ENCODE measurements at regions of chr3 and their contacts with region 1.

Region 1: GRCh38 chr3:142828703-142829305 is 60.1 kb downstream of the PCOLCE2 start:
- DNase-seq: peak; percentile 86
- ATAC-seq: peak; percentile 99
- H3K4me3 ChIP-seq: no peak overlapping the region
- H3K27ac ChIP-seq: no peak overlapping the region
- H3K4me1 ChIP-seq: no peaks in the 10 kb centered on the region
- H3K27me3 ChIP-seq: no peaks in the 10 kb centered on the region
- CTCF ChIP-seq: peak; percentile 83

Region 2: DNA sequence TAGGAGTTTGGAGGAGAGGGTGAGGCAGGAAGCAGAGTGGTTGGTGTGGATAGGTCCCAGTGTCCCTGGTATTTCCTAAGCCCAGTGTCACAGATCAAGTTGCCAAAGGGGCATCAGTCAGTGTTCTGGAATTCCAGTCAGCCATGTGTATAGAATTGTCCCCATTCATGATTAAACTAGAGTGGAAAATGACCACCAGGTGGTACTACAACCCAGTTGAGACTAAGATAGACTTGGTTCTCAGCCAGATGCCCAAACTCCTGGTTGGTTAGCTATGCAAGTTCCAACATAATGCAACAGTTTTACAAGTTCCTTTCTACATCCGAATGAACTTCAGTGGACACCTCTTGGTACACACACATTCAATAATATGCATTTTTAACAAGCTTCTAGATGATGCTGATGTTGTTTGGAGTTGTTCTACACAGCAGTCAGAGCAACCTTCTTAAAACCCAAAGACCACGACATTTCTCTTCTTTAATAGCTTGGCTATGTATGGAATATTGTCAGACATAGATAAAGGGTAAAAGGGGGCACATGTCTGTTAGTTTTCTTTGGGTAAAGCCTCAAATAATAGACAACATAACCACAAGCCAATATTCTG is 241.9 kb before region 1 on chr3:
- CTCF ChIA-PET with region 1: interaction called, 5 read pairs
- POLR2A ChIA-PET with region 1: no interaction called
- intact Hi-C with region 1: loop called (anchors 1 kb)
- DNase-seq: peak; percentile 93
- ATAC-seq: peak; percentile 99
- H3K4me3 ChIP-seq: no peak overlapping the region
- H3K27ac ChIP-seq: no peak overlapping the region
- H3K4me1 ChIP-seq: peaks cover 9% of the 10 kb centered on the region; the same call in 1 of the 2 replicates
- H3K27me3 ChIP-seq: no peaks in the 10 kb centered on the region
- CTCF ChIP-seq: peak; percentile 75

Region 3: DNA sequence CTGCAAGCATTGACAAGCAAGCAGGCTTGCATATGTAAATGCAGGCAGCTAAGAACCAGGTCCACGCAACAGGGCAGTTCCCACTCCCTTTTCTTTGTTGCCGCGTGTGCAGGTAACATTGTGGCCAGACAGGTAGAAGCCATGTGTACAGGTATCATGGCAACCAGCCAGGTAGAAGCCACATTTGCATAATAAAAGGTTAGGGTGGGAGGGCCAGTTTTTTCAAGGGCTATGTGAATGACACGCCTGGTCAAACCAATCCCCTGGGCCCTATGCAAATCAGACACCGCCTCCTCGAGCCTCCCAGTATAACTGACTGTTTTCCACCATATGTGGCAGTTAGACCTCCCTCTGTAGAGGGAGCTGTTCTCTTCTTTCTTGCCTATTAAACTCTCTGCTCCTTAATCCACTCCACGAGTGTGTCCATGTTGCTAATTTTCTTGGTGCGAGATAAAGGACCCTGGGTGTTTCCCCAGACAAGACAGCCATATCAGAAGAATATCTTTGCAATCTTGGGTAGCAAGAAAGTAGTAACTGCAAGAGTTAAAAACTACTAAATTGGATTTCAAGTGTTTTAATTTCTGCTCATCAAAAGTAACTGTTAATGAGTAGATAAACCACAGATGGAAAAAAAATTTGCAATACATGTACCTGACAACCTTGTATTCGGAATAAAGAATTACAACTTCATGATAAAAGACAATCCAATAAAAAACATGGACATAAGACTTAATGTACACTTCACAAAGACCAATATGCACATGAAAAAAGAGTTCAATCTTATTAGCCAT is 38.2 kb after region 1 on chr3:
- CTCF ChIA-PET with region 1: no interaction called
- POLR2A ChIA-PET with region 1: no interaction called
- intact Hi-C with region 1: no loop called
- DNase-seq: peak; percentile 11
- ATAC-seq: no peak
- H3K4me3 ChIP-seq: no peak overlapping the region
- H3K27ac ChIP-seq: no peak overlapping the region
- H3K4me1 ChIP-seq: peaks cover 14% of the 10 kb centered on the region
- H3K27me3 ChIP-seq: no peaks in the 10 kb centered on the region
- CTCF ChIP-seq: peak; percentile 34; the same call in 1 of the 2 replicates

Region 4: GRCh38 chr3:142904639-142905436 is 76.0 kb after region 1 on chr3:
- CTCF ChIA-PET with region 1: interaction called, 5 read pairs
- POLR2A ChIA-PET with region 1: no interaction called
- intact Hi-C with region 1: loop called (anchors 2 kb)
- DNase-seq: peak; percentile 46
- ATAC-seq: peak; percentile 66
- H3K4me3 ChIP-seq: no peak overlapping the region
- H3K27ac ChIP-seq: no peak overlapping the region
- H3K4me1 ChIP-seq: peaks cover 16% of the 10 kb centered on the region
- H3K27me3 ChIP-seq: no peaks in the 10 kb centered on the region
- CTCF ChIP-seq: peak; percentile 50; the same call in 1 of the 2 replicates

Region 5: GRCh38 chr3:142929109-142929508 is 100.3 kb after region 1 on chr3:
- CTCF ChIA-PET with region 1: no interaction called
- POLR2A ChIA-PET with region 1: no interaction called
- intact Hi-C with region 1: loop called (anchors 2 kb)
- DNase-seq: peak; percentile 70
- ATAC-seq: peak; percentile 65; the same call in 1 of the 2 replicates
- H3K4me3 ChIP-seq: no peak overlapping the region
- H3K27ac ChIP-seq: no peak overlapping the region
- H3K4me1 ChIP-seq: no peaks in the 10 kb centered on the region
- H3K27me3 ChIP-seq: no peaks in the 10 kb centered on the region
- CTCF ChIP-seq: peak; percentile 76

Region 6: DNA sequence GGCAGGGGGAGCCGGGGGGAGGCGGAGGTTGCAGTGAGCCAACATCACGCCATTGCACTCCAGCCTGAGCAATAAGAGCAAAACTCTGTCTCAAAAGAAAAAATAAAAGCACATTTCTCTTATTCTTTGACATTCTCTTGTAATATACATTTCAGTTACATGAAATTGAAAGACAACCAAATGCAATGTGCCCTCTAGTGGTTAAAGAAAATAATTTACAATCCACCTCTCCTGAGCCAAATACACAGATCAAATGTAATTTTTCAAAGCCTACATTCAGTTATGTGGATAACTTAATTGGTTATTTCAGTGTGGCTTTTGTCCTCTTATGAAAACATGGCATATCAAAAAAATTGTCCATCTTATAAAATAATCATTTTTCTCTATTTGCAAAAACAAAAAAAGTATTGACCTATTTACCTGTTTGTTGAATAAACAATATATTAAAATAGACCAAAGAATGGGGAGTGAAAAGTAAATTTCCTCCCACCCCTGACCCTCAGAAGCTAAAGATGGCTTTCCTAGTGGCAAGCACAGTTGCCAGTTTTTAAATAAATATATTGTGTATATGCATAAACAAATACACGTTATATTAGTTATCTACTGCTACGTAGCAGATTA is 158.4 kb after region 1 on chr3:
- CTCF ChIA-PET with region 1: no interaction called
- POLR2A ChIA-PET with region 1: no interaction called
- intact Hi-C with region 1: loop called (anchors 1 kb)
- DNase-seq: peak; percentile 66
- ATAC-seq: peak; percentile 53
- H3K4me3 ChIP-seq: no peak overlapping the region
- H3K27ac ChIP-seq: no peak overlapping the region
- H3K4me1 ChIP-seq: no peaks in the 10 kb centered on the region
- H3K27me3 ChIP-seq: no peaks in the 10 kb centered on the region
- CTCF ChIP-seq: peak; percentile 65

Region 7: GRCh38 chr3:142993958-142994442 is 165.2 kb after region 1 on chr3:
- CTCF ChIA-PET with region 1: no interaction called
- POLR2A ChIA-PET with region 1: no interaction called
- intact Hi-C with region 1: loop called (anchors 1 kb)
- DNase-seq: peak; percentile 72
- ATAC-seq: peak; percentile 45; the same call in 1 of the 2 replicates
- H3K4me3 ChIP-seq: no peak overlapping the region
- H3K27ac ChIP-seq: no peak overlapping the region
- H3K4me1 ChIP-seq: peaks cover 10% of the 10 kb centered on the region; the same call in 1 of the 2 replicates
- H3K27me3 ChIP-seq: no peaks in the 10 kb centered on the region
- CTCF ChIP-seq: peak; percentile 77

Region 8: GRCh38 chr3:143016321-143016972 is 187.6 kb after region 1 on chr3:
- CTCF ChIA-PET with region 1: no interaction called
- POLR2A ChIA-PET with region 1: no interaction called
- intact Hi-C with region 1: no loop called
- DNase-seq: peak; percentile 47
- ATAC-seq: no peak
- H3K4me3 ChIP-seq: no peak overlapping the region
- H3K27ac ChIP-seq: no peak overlapping the region
- H3K4me1 ChIP-seq: no peaks in the 10 kb centered on the region
- H3K27me3 ChIP-seq: no peaks in the 10 kb centered on the region
- CTCF ChIP-seq: peak; percentile 49

Measured in PC-3 (cell line).